Common myeloid progenitor, CD34-positive (primary cell): ENCODE measurements at regions of chr1 and their contacts with region 1.

Region 1: GRCh38 chr1:113811888-113812660 is at the start of gene RSBN1:
- DNase-seq: peak; percentile 99 to 100 (median 100)
- H3K4me3 ChIP-seq: peak within 1 kb of the TSS; percentile 83 to 99 (median 89)
- H3K27ac ChIP-seq: peak within 1 kb of the TSS; percentile 93 to 98
- H3K4me1 ChIP-seq: peaks cover 8 to 28% (median 16%) of the 10 kb centered on the region in 4 experiments
- H3K27me3 ChIP-seq: no peaks in the 10 kb centered on the region

Region 2: GRCh38 chr1:113759333-113760101 is 52.6 kb before region 1 on chr1 and contains the start of gene PHTF1:
- CTCF ChIA-PET with region 1: interaction called, 11 read pairs
- POLR2A ChIA-PET with region 1: interaction called, 27 read pairs
- DNase-seq: peak; percentile 91 to 94 (median 94)
- H3K4me3 ChIP-seq: peak within 1 kb of the TSS; percentile 84 to 98 (median 97)
- H3K27ac ChIP-seq: peak within 1 kb of the TSS; percentile 97 to 99
- H3K4me1 ChIP-seq: peaks cover 6 to 43% (median 26%) of the 10 kb centered on the region in 4 experiments
- H3K27me3 ChIP-seq: no peaks in the 10 kb centered on the region

Region 3: GRCh38 chr1:113849060-113849459 is 37.0 kb after region 1 on chr1:
- CTCF ChIA-PET with region 1: no interaction called
- POLR2A ChIA-PET with region 1: no interaction called
- DNase-seq: peak in 1 of 3 donors; percentile 32
- H3K4me3 ChIP-seq: no peak overlapping the region
- H3K27ac ChIP-seq: no peak overlapping the region
- H3K4me1 ChIP-seq: no peaks in the 10 kb centered on the region
- H3K27me3 ChIP-seq: no peaks in the 10 kb centered on the region